Activated B cell treated with CpG ODN at 0.5 μM for 24 hours (primary cell): ENCODE measurements at regions of chr1 and their contacts with region 1.

Region 1: GRCh38 chr1:107963601-107964335 is 1.2 kb downstream of the VAV3 start:
- DNase-seq: peak; percentile 70
- ATAC-seq: peak; percentile 62
- H3K4me3 Mint-ChIP-seq: peak overlapping the region; percentile 93
- H3K27ac Mint-ChIP-seq: peak overlapping the region; percentile 99
- H3K4me1 Mint-ChIP-seq: peaks cover 61% of the 10 kb centered on the region
- H3K27me3 Mint-ChIP-seq: no peaks in the 10 kb centered on the region
- CTCF ChIP-seq: no peak

Region 2: GRCh38 chr1:107262467-107263286 is 701.1 kb before region 1 on chr1:
- CTCF ChIA-PET with region 1: no interaction called
- POLR2A ChIA-PET with region 1: no interaction called
- intact Hi-C with region 1: no loop called
- DNase-seq: no peak
- ATAC-seq: no peak
- H3K4me3 Mint-ChIP-seq: no peak overlapping the region
- H3K27ac Mint-ChIP-seq: no peak overlapping the region
- H3K4me1 Mint-ChIP-seq: peaks cover 17% of the 10 kb centered on the region
- H3K27me3 Mint-ChIP-seq: no peaks in the 10 kb centered on the region
- CTCF ChIP-seq: no peak

Region 3: DNA sequence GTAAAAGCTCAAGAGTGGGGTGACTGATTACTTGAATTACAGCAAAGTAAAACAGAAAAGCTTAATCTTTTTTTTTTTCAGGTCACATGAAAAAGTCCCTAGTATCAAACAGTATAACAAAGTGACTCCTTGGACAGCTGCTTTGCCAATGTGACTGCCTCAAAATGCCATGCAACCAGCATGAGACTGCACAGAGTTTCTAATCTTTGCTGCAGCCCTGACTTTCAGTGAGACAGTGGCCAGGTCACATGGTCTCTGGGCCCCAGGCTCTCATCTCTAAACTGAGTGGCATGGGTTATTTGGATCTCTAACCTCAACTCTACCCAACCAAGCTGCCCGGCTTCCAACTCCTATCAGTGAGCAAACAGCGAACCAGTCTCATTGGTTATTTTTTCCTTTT is 167.8 kb before region 1 on chr1:
- CTCF ChIA-PET with region 1: interaction called, 17 read pairs
- POLR2A ChIA-PET with region 1: interaction called, 44 read pairs
- intact Hi-C with region 1: no loop called
- DNase-seq: no peak
- ATAC-seq: peak; percentile 68
- H3K4me3 Mint-ChIP-seq: peak overlapping the region; percentile 73
- H3K27ac Mint-ChIP-seq: peak overlapping the region; percentile 90
- H3K4me1 Mint-ChIP-seq: peaks cover 80% of the 10 kb centered on the region
- H3K27me3 Mint-ChIP-seq: no peaks in the 10 kb centered on the region
- CTCF ChIP-seq: no peak

Region 4: GRCh38 chr1:107897438-107898345 is 66.1 kb before region 1 on chr1:
- CTCF ChIA-PET with region 1: interaction called, 6 read pairs
- POLR2A ChIA-PET with region 1: interaction called, 13 read pairs
- intact Hi-C with region 1: loop called (anchors 1 kb)
- DNase-seq: peak; percentile 40
- ATAC-seq: peak; percentile 82
- H3K4me3 Mint-ChIP-seq: peak overlapping the region; percentile 33
- H3K27ac Mint-ChIP-seq: peak overlapping the region; percentile 92
- H3K4me1 Mint-ChIP-seq: peaks cover 88% of the 10 kb centered on the region
- H3K27me3 Mint-ChIP-seq: no peaks in the 10 kb centered on the region
- CTCF ChIP-seq: no peak

Region 5: DNA sequence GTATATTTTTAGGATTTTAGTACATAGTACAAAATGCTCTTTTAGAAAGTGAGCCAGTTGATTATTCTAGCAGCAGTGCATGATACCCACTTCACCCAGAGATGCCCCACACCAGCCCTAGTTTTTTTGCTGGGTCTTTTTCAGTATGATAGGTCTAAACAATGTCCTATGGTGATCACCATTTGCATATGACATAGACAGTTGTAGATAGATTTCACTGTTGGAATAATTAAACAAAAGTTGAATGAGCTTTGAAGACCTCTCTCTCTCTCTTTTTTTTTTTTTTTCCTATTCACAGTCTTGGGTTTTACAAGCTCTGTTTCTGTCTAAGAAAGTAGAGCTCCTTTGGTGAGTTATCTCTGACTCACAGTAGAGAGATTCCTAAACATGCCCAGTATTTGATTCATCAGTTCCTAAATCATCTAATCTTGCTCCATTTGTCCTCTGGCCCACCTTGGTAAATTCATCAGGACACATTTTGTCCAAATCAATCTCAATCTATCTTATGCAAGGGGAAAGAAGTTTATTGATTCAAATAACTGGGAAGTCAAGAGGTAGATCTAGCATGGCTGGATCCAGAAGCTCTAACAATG is 45.9 kb after region 1 on chr1:
- CTCF ChIA-PET with region 1: interaction called, 3 read pairs
- POLR2A ChIA-PET with region 1: no interaction called
- intact Hi-C with region 1: loop called (anchors 5 kb)
- DNase-seq: no peak
- ATAC-seq: no peak
- H3K4me3 Mint-ChIP-seq: no peak overlapping the region
- H3K27ac Mint-ChIP-seq: no peak overlapping the region
- H3K4me1 Mint-ChIP-seq: peaks cover 39% of the 10 kb centered on the region
- H3K27me3 Mint-ChIP-seq: no peaks in the 10 kb centered on the region
- CTCF ChIP-seq: no peak

Region 6: GRCh38 chr1:108075055-108075454 is 111.3 kb after region 1 on chr1:
- CTCF ChIA-PET with region 1: no interaction called
- POLR2A ChIA-PET with region 1: no interaction called
- intact Hi-C with region 1: loop called (anchors 1 kb)
- DNase-seq: no peak
- ATAC-seq: peak; percentile 87
- H3K4me3 Mint-ChIP-seq: no peak overlapping the region
- H3K27ac Mint-ChIP-seq: peak overlapping the region; percentile 37
- H3K4me1 Mint-ChIP-seq: peaks cover 61% of the 10 kb centered on the region
- H3K27me3 Mint-ChIP-seq: no peaks in the 10 kb centered on the region
- CTCF ChIP-seq: no peak

Region 7: GRCh38 chr1:108746372-108747205 is 782.8 kb after region 1 on chr1 and contains the start of gene STXBP3:
- CTCF ChIA-PET with region 1: no interaction called
- POLR2A ChIA-PET with region 1: no interaction called
- intact Hi-C with region 1: loop called (anchors 5 kb)
- DNase-seq: peak; percentile 99
- ATAC-seq: peak; percentile 92
- H3K4me3 Mint-ChIP-seq: peak within 1 kb of the TSS; percentile 99
- H3K27ac Mint-ChIP-seq: peak within 1 kb of the TSS; percentile 99
- H3K4me1 Mint-ChIP-seq: peaks cover 28% of the 10 kb centered on the region
- H3K27me3 Mint-ChIP-seq: no peaks in the 10 kb centered on the region
- CTCF ChIP-seq: peak; percentile 93
- total RNA-seq, gene STXBP3: 46.4 and 50.2 TPM in 2 replicates